ENCODE measurements at regions of chr2 and their contacts with region 1.

Region 1: GRCh38 chr2:241102239-241102803 is at the start of gene MTERF4:
- DNase-seq: peak; percentile 85
- H3K4me3 Mint-ChIP-seq: peak within 1 kb of the TSS; percentile 94
- H3K27ac Mint-ChIP-seq: peak within 1 kb of the TSS; percentile 97
- H3K4me1 Mint-ChIP-seq: peaks cover 23% of the 10 kb centered on the region
- H3K27me3 Mint-ChIP-seq: no peaks in the 10 kb centered on the region
- total RNA-seq, gene MTERF4: 34.4 and 35.4 TPM in 2 replicates

Region 2: GRCh38 chr2:241120440-241120839 is 18.1 kb after region 1 on chr2:
- intact Hi-C with region 1: loop called (anchors 1 kb)
- DNase-seq: no peak
- H3K4me3 Mint-ChIP-seq: no peak overlapping the region
- H3K27ac Mint-ChIP-seq: no peak overlapping the region
- H3K4me1 Mint-ChIP-seq: peaks cover 2% of the 10 kb centered on the region
- H3K27me3 Mint-ChIP-seq: no peaks in the 10 kb centered on the region

Region 3: DNA sequence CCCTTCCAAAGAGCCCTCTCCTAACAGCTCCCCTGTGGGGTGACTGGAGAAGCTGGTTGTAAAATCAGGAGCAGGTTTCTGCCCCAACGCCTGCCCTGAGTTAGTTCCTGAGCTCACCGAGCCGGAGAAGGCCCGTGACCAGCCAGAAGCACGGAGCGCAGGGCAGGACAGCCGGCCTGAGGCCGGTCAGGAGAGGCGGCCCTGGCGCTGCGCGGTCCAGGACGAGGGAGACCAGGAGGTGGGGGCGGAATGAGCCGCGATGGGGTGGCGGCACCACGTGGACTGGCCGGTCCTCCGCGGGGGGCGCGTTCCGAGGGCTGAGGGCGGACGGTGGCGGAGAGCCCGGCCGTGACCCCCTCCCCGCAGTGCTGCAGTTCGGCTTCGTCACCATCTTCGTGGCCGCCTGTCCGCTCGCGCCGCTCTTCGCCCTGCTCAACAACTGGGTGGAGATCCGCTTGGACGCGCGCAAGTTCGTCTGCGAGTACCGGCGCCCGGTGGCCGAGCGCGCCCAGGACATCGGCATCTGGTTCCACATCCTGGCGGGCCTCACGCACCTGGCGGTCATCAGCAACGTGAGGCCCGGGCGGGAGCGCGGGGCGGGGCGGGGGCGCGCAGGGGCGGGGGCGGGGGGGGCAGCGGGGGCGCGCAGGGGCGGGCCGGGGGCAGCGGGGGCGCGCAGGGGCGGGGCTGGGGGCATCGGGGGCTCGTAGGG is 115.2 kb after region 1 on chr2:
- intact Hi-C with region 1: loop called (anchors 5 kb)
- DNase-seq: peak; percentile 21
- H3K4me3 Mint-ChIP-seq: peak overlapping the region; percentile 79
- H3K27ac Mint-ChIP-seq: no peak overlapping the region
- H3K4me1 Mint-ChIP-seq: peaks cover 7% of the 10 kb centered on the region
- H3K27me3 Mint-ChIP-seq: peaks cover 19% of the 10 kb centered on the region

Measured in activated T-helper 2 cell treated with anti-CD3 and anti-CD28 coated beads, Interferon-gamma antibody, Interleukin-2, Interleukin-4, amounts not matched to agents 10 μg/mL and 5 μg/mL and 100 μg/mL, durations not matched to agents 14 hours and 24 hours and 36 hours (primary cell).